CD4-positive, alpha-beta memory T cell (primary cell): ENCODE measurements at regions of chr12 and their contacts with region 1.

Region 1: GRCh38 chr12:57744777-57745484 is at the start of gene TSPAN31:
- DNase-seq: peak; percentile 91 to 98 (median 95)
- H3K4me3 ChIP-seq: peak within 1 kb of the TSS; percentile 72 to 83
- H3K4me3 Mint-ChIP-seq: peak within 1 kb of the TSS; percentile 86 to 97 (median 92)
- H3K27ac ChIP-seq: peak within 1 kb of the TSS; percentile 93
- H3K27ac Mint-ChIP-seq: peak within 1 kb of the TSS; percentile 88 to 99 (median 97)
- H3K4me1 ChIP-seq: peaks cover 49% of the 10 kb centered on the region
- H3K4me1 Mint-ChIP-seq: peaks cover 30 to 58% (median 43%) of the 10 kb centered on the region in 4 donors
- H3K27me3 ChIP-seq: no peaks in the 10 kb centered on the region
- H3K27me3 Mint-ChIP-seq: no peaks in the 10 kb centered on the region
- total RNA-seq, gene TSPAN31: 27.5 to 30.6 TPM

Region 2: GRCh38 chr12:57520053-57520871 is 224.7 kb before region 1 on chr12 and contains the start of gene DDIT3:
- CTCF ChIA-PET with region 1: no interaction called
- POLR2A ChIA-PET with region 1: interaction called, 5 read pairs
- intact Hi-C with region 1: loop called (anchors 2 kb)
- DNase-seq: peak; percentile 99
- H3K4me3 ChIP-seq: peak within 1 kb of the TSS; percentile 75 to 99
- H3K4me3 Mint-ChIP-seq: peak within 1 kb of the TSS; percentile 93 to 99 (median 97)
- H3K27ac ChIP-seq: peak within 1 kb of the TSS; percentile 96
- H3K27ac Mint-ChIP-seq: peak within 1 kb of the TSS; percentile 99 to 100 (median 99)
- H3K4me1 ChIP-seq: peaks cover 65% of the 10 kb centered on the region
- H3K4me1 Mint-ChIP-seq: peaks cover 37 to 71% (median 49%) of the 10 kb centered on the region in 4 donors
- H3K27me3 ChIP-seq: no peaks in the 10 kb centered on the region
- H3K27me3 Mint-ChIP-seq: peaks cover 0 to 2% of the 10 kb centered on the region in 2 donors
- total RNA-seq, gene DDIT3: 38.5 to 40.8 TPM

Region 3: DNA sequence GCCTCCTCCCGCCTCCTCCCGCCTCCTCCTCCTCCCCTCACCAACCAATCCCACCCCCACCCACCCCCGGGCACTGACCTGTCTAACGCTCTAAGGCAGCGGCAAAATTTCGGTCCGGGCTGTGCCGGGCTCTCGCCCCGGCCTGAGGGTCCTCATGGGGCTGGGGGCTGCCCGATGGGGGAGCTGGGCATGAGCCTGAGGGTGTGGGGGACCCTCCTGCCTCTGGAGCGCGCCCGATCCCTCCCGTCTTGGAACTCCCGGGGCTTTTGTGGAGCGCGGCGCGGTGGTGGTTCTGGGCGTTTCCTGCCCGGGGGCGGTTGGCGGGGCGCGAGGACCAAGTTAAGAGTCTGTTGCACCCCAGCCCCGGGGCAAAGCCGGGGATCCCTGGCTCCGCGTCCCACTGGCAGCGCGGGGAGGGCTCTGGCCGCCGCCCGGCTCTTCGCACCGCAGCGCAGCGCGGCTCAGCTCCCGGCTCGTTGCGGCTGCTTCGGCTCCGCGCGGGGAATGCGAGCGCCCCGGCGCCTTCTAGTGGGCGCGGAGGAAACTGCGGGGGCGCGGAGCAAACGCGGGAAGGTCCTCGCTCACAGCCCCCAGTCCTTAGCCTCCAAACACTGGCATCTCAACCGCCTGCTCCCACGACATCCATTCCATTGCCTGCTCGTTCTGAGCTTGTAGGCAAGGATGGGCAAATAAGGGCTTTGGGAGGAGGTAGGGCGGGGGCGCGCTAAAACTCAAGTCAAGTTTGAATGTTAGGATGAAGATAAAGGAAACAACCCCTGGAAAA is 112.0 kb before region 1 on chr12 and contains the start of gene B4GALNT1:
- CTCF ChIA-PET with region 1: interaction called, 17 read pairs
- POLR2A ChIA-PET with region 1: interaction called, 9 read pairs
- intact Hi-C with region 1: loop called (anchors 1 kb)
- DNase-seq: peak in 4 of 5 donors; percentile 57 to 70 (median 61)
- H3K4me3 ChIP-seq: peak within 1 kb of the TSS in 1 of 2 donors; percentile 45
- H3K4me3 Mint-ChIP-seq: peak within 1 kb of the TSS; percentile 31 to 85 (median 74)
- H3K27ac ChIP-seq: no peak within 1 kb of the TSS
- H3K27ac Mint-ChIP-seq: peak within 1 kb of the TSS in 1 of 7 donors; percentile 17
- H3K4me1 ChIP-seq: peaks cover 13% of the 10 kb centered on the region
- H3K4me1 Mint-ChIP-seq: peaks cover 7 to 13% (median 9%) of the 10 kb centered on the region in 4 donors
- H3K27me3 ChIP-seq: peaks cover 25% of the 10 kb centered on the region
- H3K27me3 Mint-ChIP-seq: peaks cover 34 to 47% of the 10 kb centered on the region in 2 donors
- total RNA-seq, gene B4GALNT1: not detected

Region 4: GRCh38 chr12:57674691-57675090 is 70.2 kb before region 1 on chr12:
- CTCF ChIA-PET with region 1: no interaction called
- POLR2A ChIA-PET with region 1: no interaction called
- intact Hi-C with region 1: no loop called
- DNase-seq: no peak
- H3K4me3 ChIP-seq: no peak overlapping the region
- H3K4me3 Mint-ChIP-seq: no peak overlapping the region
- H3K27ac ChIP-seq: no peak overlapping the region
- H3K27ac Mint-ChIP-seq: no peak overlapping the region
- H3K4me1 ChIP-seq: no peaks in the 10 kb centered on the region
- H3K4me1 Mint-ChIP-seq: no peaks in the 10 kb centered on the region
- H3K27me3 ChIP-seq: no peaks in the 10 kb centered on the region
- H3K27me3 Mint-ChIP-seq: peaks cover 2 to 5% of the 10 kb centered on the region in 2 donors

Region 5: DNA sequence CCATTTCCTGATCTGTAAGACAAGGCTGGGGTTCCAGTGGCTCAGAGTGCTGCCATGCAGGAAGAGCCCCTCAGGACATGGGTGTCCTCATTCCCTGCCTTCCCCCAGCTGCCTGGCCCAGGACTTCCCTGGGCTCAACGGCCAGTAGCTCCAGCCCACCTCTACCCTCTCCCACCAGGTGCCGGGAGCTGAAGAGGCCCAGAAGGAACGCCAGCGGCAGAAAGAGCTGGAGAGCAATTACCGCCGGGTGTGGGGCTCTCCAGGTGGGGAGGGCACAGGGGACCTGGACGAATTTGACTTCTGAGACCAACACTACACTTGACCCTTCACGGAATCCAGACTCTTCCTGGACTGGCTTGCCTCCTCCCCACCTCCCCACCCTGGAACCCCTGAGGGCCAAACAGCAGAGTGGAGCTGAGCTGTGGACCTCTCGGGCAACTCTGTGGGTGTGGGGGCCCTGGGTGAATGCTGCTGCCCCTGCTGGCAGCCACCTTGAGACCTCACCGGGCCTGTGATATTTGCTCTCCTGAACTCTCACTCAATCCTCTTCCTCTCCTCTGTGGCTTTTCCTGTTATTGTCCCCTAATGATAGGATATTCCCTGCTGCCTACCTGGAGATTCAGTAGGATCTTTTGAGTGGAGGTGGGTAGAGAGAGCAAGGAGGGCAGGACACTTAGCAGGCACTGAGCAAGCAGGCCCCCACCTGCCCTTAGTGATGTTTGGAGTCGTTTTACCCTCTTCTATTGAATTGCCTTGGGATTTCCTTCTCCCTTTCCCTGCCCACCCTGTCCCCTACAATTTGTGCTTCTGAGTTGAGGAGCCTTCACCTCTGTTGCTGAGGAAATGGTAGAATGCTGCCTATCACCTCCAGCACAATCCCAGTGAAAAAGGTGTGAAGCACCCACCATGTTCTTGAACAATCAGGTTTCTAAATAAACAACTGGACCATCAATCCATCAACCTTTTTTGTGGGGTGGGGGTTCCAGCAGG is 24.0 kb before region 1 on chr12:
- CTCF ChIA-PET with region 1: interaction called, 10 read pairs
- POLR2A ChIA-PET with region 1: interaction called, 32 read pairs
- intact Hi-C with region 1: loop called (anchors 1 kb)
- DNase-seq: no peak
- H3K4me3 ChIP-seq: no peak overlapping the region
- H3K4me3 Mint-ChIP-seq: no peak overlapping the region
- H3K27ac ChIP-seq: no peak overlapping the region
- H3K27ac Mint-ChIP-seq: peak overlapping the region in 3 of 7 donors; percentile 13 to 70 (median 49)
- H3K4me1 ChIP-seq: no peaks in the 10 kb centered on the region
- H3K4me1 Mint-ChIP-seq: peaks cover 12 to 32% (median 20%) of the 10 kb centered on the region in 4 donors
- H3K27me3 ChIP-seq: no peaks in the 10 kb centered on the region
- H3K27me3 Mint-ChIP-seq: no peaks in the 10 kb centered on the region

Region 6: GRCh38 chr12:57759360-57759980 is 14.5 kb after region 1 on chr12:
- CTCF ChIA-PET with region 1: interaction called, 51 read pairs
- POLR2A ChIA-PET with region 1: interaction called, 34 read pairs
- intact Hi-C with region 1: loop called (anchors 2 kb)
- DNase-seq: peak in 4 of 5 donors; percentile 47 to 65 (median 56)
- H3K4me3 ChIP-seq: no peak overlapping the region
- H3K4me3 Mint-ChIP-seq: peak overlapping the region in 3 of 8 donors; percentile 39 to 70 (median 64)
- H3K27ac ChIP-seq: no peak overlapping the region
- H3K27ac Mint-ChIP-seq: peak overlapping the region in 5 of 7 donors; percentile 32 to 82 (median 79)
- H3K4me1 ChIP-seq: peaks cover 33% of the 10 kb centered on the region
- H3K4me1 Mint-ChIP-seq: peaks cover 25 to 54% (median 35%) of the 10 kb centered on the region in 4 donors
- H3K27me3 ChIP-seq: no peaks in the 10 kb centered on the region
- H3K27me3 Mint-ChIP-seq: peaks cover 3 to 6% of the 10 kb centered on the region in 2 donors

Region 7: GRCh38 chr12:57782608-57783465 is 37.9 kb after region 1 on chr12 and contains the start of gene TSFM:
- CTCF ChIA-PET with region 1: interaction called, 5 read pairs
- POLR2A ChIA-PET with region 1: interaction called, 12 read pairs
- intact Hi-C with region 1: no loop called
- DNase-seq: peak; percentile 93 to 96 (median 94)
- H3K4me3 ChIP-seq: peak within 1 kb of the TSS; percentile 92 to 97
- H3K4me3 Mint-ChIP-seq: peak within 1 kb of the TSS; percentile 95 to 100 (median 98)
- H3K27ac ChIP-seq: peak within 1 kb of the TSS; percentile 73
- H3K27ac Mint-ChIP-seq: peak within 1 kb of the TSS; percentile 95 to 100 (median 99)
- H3K4me1 ChIP-seq: peaks cover 59% of the 10 kb centered on the region
- H3K4me1 Mint-ChIP-seq: peaks cover 46 to 57% (median 50%) of the 10 kb centered on the region in 4 donors
- H3K27me3 ChIP-seq: no peaks in the 10 kb centered on the region
- H3K27me3 Mint-ChIP-seq: no peaks in the 10 kb centered on the region
- total RNA-seq, gene TSFM: 18.9 to 22.2 TPM

Region 8: DNA sequence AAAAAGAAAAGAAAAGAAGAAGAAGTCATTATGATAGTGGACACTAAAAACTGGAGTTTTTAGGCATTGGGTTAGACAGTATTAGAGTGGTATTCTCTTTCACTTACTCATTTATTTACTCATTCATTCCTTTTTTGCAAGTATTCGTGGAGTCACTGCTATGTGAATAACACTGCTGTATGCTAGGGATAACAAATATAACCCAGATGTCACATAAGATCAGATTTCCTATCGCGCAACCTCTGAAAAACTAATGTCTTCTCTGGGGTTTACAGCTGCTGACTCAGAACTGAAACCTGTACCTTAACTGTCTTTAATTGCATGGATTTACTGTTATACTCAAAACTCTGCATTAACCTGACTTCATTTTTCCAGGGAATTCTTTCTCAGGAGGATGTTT is 821.7 kb after region 1 on chr12:
- CTCF ChIA-PET with region 1: no interaction called
- POLR2A ChIA-PET with region 1: no interaction called
- intact Hi-C with region 1: no loop called
- DNase-seq: no peak
- H3K4me3 ChIP-seq: no peak overlapping the region
- H3K4me3 Mint-ChIP-seq: no peak overlapping the region
- H3K27ac ChIP-seq: no peak overlapping the region
- H3K27ac Mint-ChIP-seq: no peak overlapping the region
- H3K4me1 ChIP-seq: no peaks in the 10 kb centered on the region
- H3K4me1 Mint-ChIP-seq: no peaks in the 10 kb centered on the region
- H3K27me3 ChIP-seq: no peaks in the 10 kb centered on the region
- H3K27me3 Mint-ChIP-seq: peaks cover 0 to 4% of the 10 kb centered on the region in 2 donors